Activated CD4-positive, alpha-beta T cell treated with anti-CD3 and anti-CD28 coated beads for 36 hours (primary cell): ENCODE measurements at regions of chr3 and their contacts with region 1.

Region 1: GRCh38 chr3:186617038-186617946 is 4.4 kb downstream of the AHSG start:
- DNase-seq: peak; percentile 95
- ATAC-seq: peak; percentile 96
- H3K4me3 Mint-ChIP-seq: peak overlapping the region; percentile 32
- H3K27ac Mint-ChIP-seq: peak overlapping the region; percentile 11
- H3K4me1 Mint-ChIP-seq: peaks cover 23% of the 10 kb centered on the region
- H3K27me3 Mint-ChIP-seq: peaks cover 26% of the 10 kb centered on the region

Region 2: GRCh38 chr3:185659942-185660921 is 957.1 kb before region 1 on chr3:
- CTCF ChIA-PET with region 1: interaction called, 6 read pairs
- POLR2A ChIA-PET with region 1: no interaction called
- intact Hi-C with region 1: loop called in 1 of 2 experiments (anchors 5 kb)
- DNase-seq: peak; percentile 85
- ATAC-seq: peak; percentile 95
- H3K4me3 Mint-ChIP-seq: no peak overlapping the region
- H3K27ac Mint-ChIP-seq: no peak overlapping the region
- H3K4me1 Mint-ChIP-seq: peaks cover 2% of the 10 kb centered on the region
- H3K27me3 Mint-ChIP-seq: peaks cover 17% of the 10 kb centered on the region

Region 3: GRCh38 chr3:185983495-185984141 is 633.7 kb before region 1 on chr3:
- CTCF ChIA-PET with region 1: interaction called, 38 read pairs
- POLR2A ChIA-PET with region 1: no interaction called
- intact Hi-C with region 1: no loop called
- DNase-seq: peak; percentile 71
- ATAC-seq: peak; percentile 83
- H3K4me3 Mint-ChIP-seq: no peak overlapping the region
- H3K27ac Mint-ChIP-seq: no peak overlapping the region
- H3K4me1 Mint-ChIP-seq: peaks cover 4% of the 10 kb centered on the region
- H3K27me3 Mint-ChIP-seq: peaks cover 7% of the 10 kb centered on the region

Region 4: GRCh38 chr3:186259612-186260383 is 357.5 kb before region 1 on chr3:
- CTCF ChIA-PET with region 1: interaction called, 9 read pairs
- POLR2A ChIA-PET with region 1: no interaction called
- intact Hi-C with region 1: loop called in 1 of 2 experiments (anchors 1 kb)
- DNase-seq: peak; percentile 86
- ATAC-seq: peak; percentile 89
- H3K4me3 Mint-ChIP-seq: peak overlapping the region; percentile 40
- H3K27ac Mint-ChIP-seq: peak overlapping the region; percentile 68
- H3K4me1 Mint-ChIP-seq: peaks cover 28% of the 10 kb centered on the region
- H3K27me3 Mint-ChIP-seq: no peaks in the 10 kb centered on the region

Region 5: DNA sequence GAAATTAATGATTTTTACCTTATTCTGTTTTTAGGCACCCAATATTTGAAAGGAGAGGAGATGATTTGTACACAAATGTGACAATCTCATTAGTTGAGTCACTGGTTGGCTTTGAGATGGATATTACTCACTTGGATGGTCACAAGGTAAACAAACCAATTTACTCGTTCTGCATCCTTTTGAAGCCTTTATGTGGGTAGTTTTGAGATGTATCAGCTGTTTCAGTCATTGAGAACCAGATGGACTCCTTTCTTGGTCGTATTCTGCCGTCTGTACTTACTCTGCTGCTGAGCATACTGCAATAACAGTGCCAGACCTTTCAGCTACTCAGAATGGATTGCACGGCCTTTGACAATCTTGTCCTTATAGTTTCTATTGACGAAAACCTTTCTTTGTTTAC is 33.5 kb before region 1 on chr3:
- CTCF ChIA-PET with region 1: interaction called, 42 read pairs
- POLR2A ChIA-PET with region 1: interaction called, 4 read pairs
- intact Hi-C with region 1: no loop called
- DNase-seq: no peak
- ATAC-seq: peak; percentile 33
- H3K4me3 Mint-ChIP-seq: no peak overlapping the region
- H3K27ac Mint-ChIP-seq: no peak overlapping the region
- H3K4me1 Mint-ChIP-seq: peaks cover 7% of the 10 kb centered on the region
- H3K27me3 Mint-ChIP-seq: no peaks in the 10 kb centered on the region

Region 6: DNA sequence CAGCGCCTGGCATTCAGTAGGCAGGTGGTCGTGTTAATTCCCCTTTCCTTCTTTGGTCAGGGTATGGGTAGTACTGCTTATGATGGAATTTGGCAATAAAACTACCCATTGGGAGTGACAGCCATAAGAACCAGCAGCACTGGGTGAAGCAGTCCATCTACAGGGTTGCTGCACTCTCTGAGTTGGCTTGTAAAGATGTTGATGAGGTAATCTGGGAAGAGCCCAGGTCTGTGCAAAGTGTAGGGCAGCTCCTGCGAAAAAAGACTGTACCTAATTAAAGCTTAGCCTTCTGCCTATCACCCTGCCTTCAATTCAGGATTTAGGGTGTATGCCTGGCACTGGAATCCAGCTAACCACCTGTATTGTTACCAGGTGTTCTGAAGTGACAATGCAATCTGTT is 18.2 kb after region 1 on chr3:
- CTCF ChIA-PET with region 1: interaction called, 10 read pairs
- POLR2A ChIA-PET with region 1: no interaction called
- intact Hi-C with region 1: no loop called
- DNase-seq: no peak
- ATAC-seq: no peak
- H3K4me3 Mint-ChIP-seq: no peak overlapping the region
- H3K27ac Mint-ChIP-seq: no peak overlapping the region
- H3K4me1 Mint-ChIP-seq: no peaks in the 10 kb centered on the region
- H3K27me3 Mint-ChIP-seq: peaks cover 8% of the 10 kb centered on the region

Region 7: DNA sequence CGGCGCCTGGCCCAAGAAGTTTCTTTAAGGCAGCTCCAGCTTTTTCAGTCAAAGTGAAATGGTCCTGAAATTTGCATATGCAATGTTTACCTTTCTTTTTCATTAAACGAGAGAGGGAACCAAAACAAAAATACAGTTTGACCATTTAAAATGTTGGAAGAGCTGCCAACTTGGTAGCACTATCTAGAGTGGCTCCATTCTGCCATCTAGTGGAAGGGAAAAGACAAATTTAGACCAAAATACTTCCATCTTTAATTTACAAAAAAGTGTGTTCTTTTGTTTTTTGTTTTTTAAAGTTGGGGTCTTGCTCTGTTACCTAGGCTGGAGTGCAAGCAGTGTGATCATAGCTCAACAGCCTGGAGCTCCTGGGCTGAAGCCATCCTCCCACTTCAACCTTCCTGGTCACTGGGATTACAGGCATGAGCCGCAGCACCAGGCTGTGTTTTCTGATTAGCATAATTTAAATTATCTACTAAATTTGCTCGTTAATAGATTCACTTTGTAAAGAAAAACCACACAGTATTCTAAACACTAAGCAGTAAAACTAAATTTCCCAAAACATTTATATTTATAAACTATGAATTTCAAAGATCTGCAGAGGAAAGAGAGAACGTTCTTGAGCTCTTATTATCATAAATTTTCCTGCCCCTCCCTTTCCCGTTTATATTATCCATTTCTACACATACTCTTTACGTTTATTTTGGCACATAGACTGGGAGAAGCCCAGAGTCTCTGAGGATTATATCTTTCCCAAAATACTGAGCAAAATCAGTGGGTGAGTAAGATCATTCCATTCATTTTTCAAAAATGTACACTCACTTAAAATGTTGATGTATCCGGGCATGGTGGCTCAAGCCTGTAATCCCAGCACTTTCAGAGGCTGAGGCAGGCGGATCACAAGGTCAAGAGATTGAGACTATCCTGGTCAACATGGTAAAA is 204.4 kb after region 1 on chr3:
- CTCF ChIA-PET with region 1: interaction called, 30 read pairs
- POLR2A ChIA-PET with region 1: interaction called, 3 read pairs
- intact Hi-C with region 1: loop called (anchors 1 to 2 kb)
- DNase-seq: no peak
- ATAC-seq: no peak
- H3K4me3 Mint-ChIP-seq: no peak overlapping the region
- H3K27ac Mint-ChIP-seq: no peak overlapping the region
- H3K4me1 Mint-ChIP-seq: peaks cover 20% of the 10 kb centered on the region
- H3K27me3 Mint-ChIP-seq: peaks cover 5% of the 10 kb centered on the region